BJ (cell line): ENCODE measurements at regions of chr9 and their contacts with region 1.

Region 1: DNA sequence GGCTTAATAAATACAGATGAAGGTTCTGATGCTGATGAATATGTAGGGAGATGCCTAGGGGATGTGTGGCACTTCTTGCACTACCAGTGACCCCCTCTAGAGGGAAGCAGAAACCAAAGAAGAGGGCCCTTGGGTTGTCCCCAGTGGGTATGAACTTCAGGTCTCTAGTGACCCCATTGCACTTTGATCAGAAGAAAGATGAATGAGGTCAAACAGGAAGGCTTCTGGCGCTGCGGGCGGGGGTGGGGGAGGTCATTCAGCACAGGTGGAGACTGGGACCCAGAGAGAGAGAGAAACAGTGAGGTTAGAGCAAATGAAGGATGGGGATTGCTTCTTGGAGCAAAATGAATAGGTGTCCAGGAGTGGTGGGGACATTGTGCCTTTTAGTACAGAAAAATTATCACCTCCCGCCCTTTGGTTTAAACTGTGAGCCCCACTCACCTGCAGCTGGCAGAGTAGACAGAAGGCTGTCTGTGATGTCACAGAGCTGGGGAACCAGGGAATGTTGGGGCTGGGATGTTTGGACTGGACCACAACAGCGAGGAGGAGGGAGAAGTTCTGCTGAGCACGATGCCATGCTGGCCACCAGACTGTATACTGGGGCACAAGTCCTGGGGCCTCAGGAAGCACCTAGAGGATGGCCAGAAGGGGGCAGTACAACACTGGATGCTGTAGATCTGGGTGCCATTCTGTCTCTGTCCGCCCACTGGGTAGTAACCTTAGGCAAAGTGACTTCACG is at the start of gene TEX48:
- DNase-seq: no peak
- H3K4me3 ChIP-seq: no peak within 1 kb of the TSS
- H3K27me3 ChIP-seq: no peaks in the 10 kb centered on the region; the same call in 1 of the 2 replicates
- CTCF ChIP-seq: peak; percentile 82
- polyA plus RNA-seq, gene TEX48: not detected in 2 replicates

Region 2: GRCh38 chr9:114180696-114181606 is 500.8 kb before region 1 on chr9:
- CTCF ChIA-PET with region 1: no interaction called
- POLR2A ChIA-PET with region 1: no interaction called
- DNase-seq: no peak
- H3K4me3 ChIP-seq: no peak overlapping the region
- H3K27me3 ChIP-seq: no peaks in the 10 kb centered on the region
- CTCF ChIP-seq: no peak

Region 3: GRCh38 chr9:114587385-114588202 is 94.2 kb before region 1 on chr9 and contains the start of gene ATP6V1G1:
- CTCF ChIA-PET with region 1: no interaction called
- POLR2A ChIA-PET with region 1: no interaction called
- DNase-seq: peak; percentile 97
- H3K4me3 ChIP-seq: peak within 1 kb of the TSS; percentile 81
- H3K27me3 ChIP-seq: no peaks in the 10 kb centered on the region
- CTCF ChIP-seq: peak; percentile 26; the same call in 1 of the 2 replicates
- polyA plus RNA-seq, gene ATP6V1G1: 89.2 and 134 TPM in 2 replicates

Region 4: GRCh38 chr9:114671605-114672004 is 10.2 kb before region 1 on chr9:
- CTCF ChIA-PET with region 1: interaction called, 17 read pairs
- POLR2A ChIA-PET with region 1: no interaction called
- DNase-seq: no peak
- H3K4me3 ChIP-seq: no peak overlapping the region
- H3K27me3 ChIP-seq: no peaks in the 10 kb centered on the region
- CTCF ChIP-seq: no peak

Region 5: DNA sequence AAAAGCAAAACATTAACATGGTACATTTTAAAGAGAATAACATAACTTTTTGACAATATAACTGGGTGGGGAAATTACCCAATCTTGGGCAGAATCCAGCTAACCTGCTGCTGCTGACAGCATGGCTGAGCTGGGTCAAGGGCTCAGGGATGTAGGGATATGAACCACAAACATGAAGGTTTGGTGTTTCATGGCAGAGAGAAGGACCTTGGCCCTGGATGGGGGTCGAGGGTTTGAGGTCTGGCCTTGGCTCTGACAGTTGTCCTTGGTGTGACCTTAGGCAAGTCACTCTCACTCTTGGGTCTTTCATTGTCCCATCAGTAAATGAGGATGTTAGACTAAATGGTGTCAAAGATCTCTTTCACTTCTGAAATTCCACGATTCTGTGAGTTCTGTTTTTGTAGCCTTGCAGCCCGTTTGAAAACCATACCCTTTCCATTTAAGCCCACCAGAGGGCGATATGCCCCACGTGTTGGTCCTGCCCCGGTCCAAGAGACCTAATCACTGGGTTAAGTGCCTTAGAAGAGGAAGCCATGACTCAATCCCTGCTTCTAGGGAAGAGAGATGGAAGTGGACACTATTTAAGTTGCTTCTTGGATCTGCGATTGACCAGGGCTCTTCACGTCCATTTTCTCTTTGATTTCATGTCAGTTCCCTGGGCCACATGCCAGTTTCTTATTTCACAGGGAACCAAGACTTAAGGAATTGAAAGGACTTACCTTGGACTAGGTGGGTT is 57.0 kb after region 1 on chr9:
- CTCF ChIA-PET with region 1: interaction called, 87 read pairs
- POLR2A ChIA-PET with region 1: no interaction called
- DNase-seq: peak; percentile 34
- H3K4me3 ChIP-seq: no peak overlapping the region
- H3K27me3 ChIP-seq: no peaks in the 10 kb centered on the region; the same call in 1 of the 2 replicates
- CTCF ChIP-seq: peak; percentile 82

Region 6: DNA sequence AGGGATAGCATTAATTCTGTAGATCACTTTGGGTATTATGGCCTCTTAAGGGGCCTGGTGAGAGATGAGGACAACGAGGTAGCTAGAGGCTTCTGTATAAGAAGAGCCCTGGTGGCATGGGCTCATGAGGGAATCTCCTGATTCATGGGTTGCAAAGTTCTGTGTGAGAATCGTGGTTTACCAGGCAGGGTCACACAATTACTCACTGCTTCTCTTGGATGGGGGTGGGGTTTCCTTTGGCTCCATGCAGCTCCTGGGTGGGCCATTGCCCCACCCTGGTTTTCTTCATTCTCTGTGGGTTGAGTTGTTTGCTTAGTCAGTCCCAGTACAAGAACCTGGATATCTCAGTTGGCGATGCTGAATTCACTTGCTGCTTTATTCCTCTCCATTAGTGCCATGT is 155.0 kb after region 1 on chr9:
- CTCF ChIA-PET with region 1: no interaction called
- POLR2A ChIA-PET with region 1: no interaction called
- DNase-seq: no peak
- H3K4me3 ChIP-seq: no peak overlapping the region
- H3K27me3 ChIP-seq: peaks cover 1% of the 10 kb centered on the region; the same call in 1 of the 2 replicates
- CTCF ChIP-seq: no peak

Region 7: DNA sequence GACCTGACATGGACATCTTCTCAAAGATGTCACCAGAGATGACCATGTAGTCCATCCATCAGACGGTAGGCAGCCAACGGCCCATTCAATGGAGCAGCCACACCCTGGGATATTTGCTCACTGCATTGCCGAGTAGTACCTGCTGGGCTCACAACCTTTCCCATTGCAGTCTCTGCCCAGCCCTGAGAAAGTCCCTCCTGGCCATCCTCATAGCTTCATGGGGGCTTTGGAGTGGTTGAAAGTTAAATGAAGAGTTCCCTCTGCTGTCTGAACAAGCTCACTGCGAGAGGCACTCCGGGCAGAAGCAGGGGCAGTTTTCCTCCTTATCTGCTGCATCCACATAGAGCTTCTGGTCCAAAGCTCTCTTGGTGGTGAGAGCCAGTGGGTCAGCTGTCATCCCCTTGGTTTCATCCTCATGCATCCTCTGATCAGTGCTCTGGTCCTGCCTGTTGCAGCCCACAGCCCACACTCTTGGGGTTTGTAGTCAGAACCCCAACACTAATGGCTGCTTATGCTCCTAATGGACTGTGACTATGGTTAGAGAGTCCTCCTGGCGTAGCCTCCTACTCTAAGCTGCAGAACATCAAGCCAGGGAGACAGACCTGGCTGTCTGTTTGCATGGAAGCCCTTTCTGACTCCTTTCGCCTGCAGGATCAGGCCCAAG is 225.3 kb after region 1 on chr9:
- CTCF ChIA-PET with region 1: interaction called, 195 read pairs
- POLR2A ChIA-PET with region 1: no interaction called
- DNase-seq: no peak
- H3K4me3 ChIP-seq: no peak overlapping the region
- H3K27me3 ChIP-seq: no peaks in the 10 kb centered on the region
- CTCF ChIP-seq: peak; percentile 75

Region 8: GRCh38 chr9:114938687-114939575 is 257.2 kb after region 1 on chr9:
- CTCF ChIA-PET with region 1: no interaction called
- POLR2A ChIA-PET with region 1: no interaction called
- DNase-seq: no peak
- H3K4me3 ChIP-seq: no peak overlapping the region
- H3K27me3 ChIP-seq: peaks cover 8% of the 10 kb centered on the region
- CTCF ChIP-seq: no peak

Region 9: DNA sequence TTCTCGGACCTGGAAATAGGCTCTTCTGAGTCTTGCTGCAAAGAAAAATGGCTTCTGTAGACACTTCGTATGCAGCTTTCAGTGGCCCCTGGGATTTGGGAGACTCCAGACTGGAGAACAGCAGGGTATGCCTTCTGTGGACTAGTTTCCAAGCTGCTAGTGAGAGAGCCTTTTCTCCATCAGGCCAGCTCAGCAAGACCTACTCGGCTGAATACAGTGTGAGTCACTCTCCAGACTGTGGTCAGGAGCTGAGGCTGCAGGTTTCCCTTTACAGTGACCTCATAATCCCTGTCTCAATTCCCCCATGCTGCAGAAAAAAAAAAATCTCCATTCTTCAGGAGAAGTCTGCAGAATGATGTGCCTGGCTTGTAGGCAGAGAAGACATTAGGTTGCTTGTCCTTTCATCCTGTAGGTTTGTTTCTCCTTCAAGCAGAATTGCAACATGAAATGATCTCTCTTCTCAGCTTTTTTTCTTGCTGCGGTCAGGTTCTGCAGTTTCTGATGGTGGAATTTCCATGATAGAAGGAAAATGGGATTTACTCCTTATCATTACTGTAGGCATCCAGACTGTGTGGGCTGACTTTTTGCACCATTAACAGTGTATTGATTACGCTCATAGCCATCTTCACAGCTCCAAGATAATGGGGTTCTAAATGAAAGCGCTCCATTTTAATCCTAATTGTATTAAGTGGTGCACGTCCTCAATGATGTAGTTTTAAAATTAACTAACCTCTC is 326.9 kb after region 1 on chr9:
- CTCF ChIA-PET with region 1: interaction called, 28 read pairs
- POLR2A ChIA-PET with region 1: no interaction called
- DNase-seq: peak; percentile 52
- H3K4me3 ChIP-seq: no peak overlapping the region
- H3K27me3 ChIP-seq: peaks cover 5% of the 10 kb centered on the region
- CTCF ChIP-seq: no peak